CD8-positive, alpha-beta T cell (primary cell): ENCODE measurements at regions of chr1 and their contacts with region 1.

Region 1: DNA sequence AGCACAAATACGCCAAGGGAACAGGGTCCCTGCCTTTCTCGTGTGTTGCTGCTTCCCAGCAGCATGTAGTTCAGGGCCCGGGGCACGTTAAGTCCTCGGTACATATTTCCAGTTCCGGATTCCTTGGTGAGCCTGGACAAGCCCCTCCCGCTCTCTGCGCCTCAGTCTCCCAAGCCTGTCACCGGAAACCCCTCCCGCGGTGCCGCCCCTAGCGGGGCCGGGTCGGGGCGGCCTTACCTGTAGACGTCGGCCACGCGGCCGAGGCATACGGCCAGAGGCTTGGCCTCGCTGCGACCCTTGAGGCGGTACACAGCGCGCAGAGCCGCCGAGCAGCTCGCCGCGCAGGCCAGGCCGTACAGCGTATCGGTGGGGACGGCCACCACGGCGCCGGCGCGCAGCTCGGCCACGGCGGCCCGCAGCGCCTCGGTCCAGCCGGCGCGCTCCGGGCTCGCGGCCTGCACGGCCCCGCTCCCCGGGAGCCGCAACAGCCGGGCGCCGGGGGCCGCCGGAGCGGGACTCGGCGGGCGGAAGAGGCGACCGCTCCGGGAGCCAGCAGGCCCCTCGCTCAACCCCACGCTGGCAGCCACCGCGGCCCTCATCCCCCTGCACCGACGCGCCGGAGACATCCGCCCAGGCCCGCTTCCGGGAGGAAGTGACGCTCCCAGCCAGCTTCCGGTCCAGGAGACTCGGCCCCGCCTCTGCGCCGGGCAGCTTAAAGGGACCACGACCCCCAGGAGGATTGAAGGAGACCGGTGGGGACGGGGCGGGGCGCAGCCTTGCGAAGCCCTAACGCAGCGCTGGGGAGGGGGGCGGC is at the starts of genes C1orf122 and YRDC:
- DNase-seq: peak; percentile 82 to 95 (median 94)
- ATAC-seq: peak; percentile 88
- H3K4me3 ChIP-seq: peak within 1 kb of the TSS; percentile 69 to 92
- H3K4me3 Mint-ChIP-seq: peak within 1 kb of the TSS; percentile 97
- H3K27ac ChIP-seq: peak within 1 kb of the TSS; percentile 86 to 89
- H3K27ac Mint-ChIP-seq: peak within 1 kb of the TSS; percentile 98
- H3K4me1 ChIP-seq: peaks cover 30% of the 10 kb centered on the region
- H3K4me1 Mint-ChIP-seq: peaks cover 40% of the 10 kb centered on the region
- H3K27me3 ChIP-seq: no peaks in the 10 kb centered on the region
- H3K27me3 Mint-ChIP-seq: no peaks in the 10 kb centered on the region
- CTCF ChIP-seq: no peak
- total RNA-seq, gene C1orf122: 13.8 to 14.8 TPM
- total RNA-seq, gene YRDC: 31.6 to 32.8 TPM

Region 2: DNA sequence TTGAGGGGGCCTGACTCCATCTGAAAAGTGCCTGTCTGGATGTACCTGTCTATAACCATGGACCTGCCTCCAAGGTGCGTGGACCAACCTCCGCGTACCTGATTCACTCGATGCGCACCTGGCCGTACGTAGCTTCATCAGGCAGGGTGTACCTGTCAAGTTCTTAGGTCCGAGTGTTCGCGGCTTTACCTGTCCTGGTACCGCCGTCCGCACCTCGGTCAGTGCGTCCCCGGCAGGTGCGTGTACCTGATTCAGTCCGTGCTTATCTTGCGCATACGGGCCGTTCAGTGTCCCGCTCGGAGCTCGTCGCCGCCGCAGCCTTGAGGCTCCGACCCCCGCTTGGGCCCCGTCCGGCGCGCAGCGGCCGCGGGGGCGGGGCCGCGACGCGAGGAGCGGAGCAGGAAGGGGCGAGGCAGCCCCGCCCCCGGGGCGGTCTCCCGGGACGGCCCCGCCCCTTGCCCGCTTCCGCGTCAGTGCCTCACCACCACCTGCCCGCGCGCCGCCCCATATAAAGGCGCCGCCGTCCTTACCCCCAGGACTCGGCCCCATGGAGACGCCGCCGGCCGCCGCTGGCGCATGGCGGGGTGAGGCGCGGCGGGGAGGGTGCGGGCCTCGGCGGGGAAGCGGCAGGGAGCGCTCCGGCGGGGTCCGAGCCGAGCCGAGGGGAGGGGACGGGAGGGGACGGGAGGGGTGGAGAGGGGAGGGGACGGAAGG is 333.6 kb before region 1 on chr1 and contains the start of gene ZC3H12A:
- CTCF ChIA-PET with region 1: no interaction called
- POLR2A ChIA-PET with region 1: interaction called, 8 read pairs
- intact Hi-C with region 1: loop called in 1 of 2 experiments (anchors 10 kb)
- DNase-seq: peak; percentile 86 to 97 (median 92)
- ATAC-seq: peak; percentile 57
- H3K4me3 ChIP-seq: peak within 1 kb of the TSS; percentile 93 to 95
- H3K4me3 Mint-ChIP-seq: peak within 1 kb of the TSS; percentile 95
- H3K27ac ChIP-seq: peak within 1 kb of the TSS; percentile 95 to 99
- H3K27ac Mint-ChIP-seq: peak within 1 kb of the TSS; percentile 99
- H3K4me1 ChIP-seq: peaks cover 43% of the 10 kb centered on the region
- H3K4me1 Mint-ChIP-seq: peaks cover 59% of the 10 kb centered on the region
- H3K27me3 ChIP-seq: no peaks in the 10 kb centered on the region
- H3K27me3 Mint-ChIP-seq: no peaks in the 10 kb centered on the region
- CTCF ChIP-seq: no peak
- total RNA-seq, gene ZC3H12A: 202 to 205 TPM

Region 3: DNA sequence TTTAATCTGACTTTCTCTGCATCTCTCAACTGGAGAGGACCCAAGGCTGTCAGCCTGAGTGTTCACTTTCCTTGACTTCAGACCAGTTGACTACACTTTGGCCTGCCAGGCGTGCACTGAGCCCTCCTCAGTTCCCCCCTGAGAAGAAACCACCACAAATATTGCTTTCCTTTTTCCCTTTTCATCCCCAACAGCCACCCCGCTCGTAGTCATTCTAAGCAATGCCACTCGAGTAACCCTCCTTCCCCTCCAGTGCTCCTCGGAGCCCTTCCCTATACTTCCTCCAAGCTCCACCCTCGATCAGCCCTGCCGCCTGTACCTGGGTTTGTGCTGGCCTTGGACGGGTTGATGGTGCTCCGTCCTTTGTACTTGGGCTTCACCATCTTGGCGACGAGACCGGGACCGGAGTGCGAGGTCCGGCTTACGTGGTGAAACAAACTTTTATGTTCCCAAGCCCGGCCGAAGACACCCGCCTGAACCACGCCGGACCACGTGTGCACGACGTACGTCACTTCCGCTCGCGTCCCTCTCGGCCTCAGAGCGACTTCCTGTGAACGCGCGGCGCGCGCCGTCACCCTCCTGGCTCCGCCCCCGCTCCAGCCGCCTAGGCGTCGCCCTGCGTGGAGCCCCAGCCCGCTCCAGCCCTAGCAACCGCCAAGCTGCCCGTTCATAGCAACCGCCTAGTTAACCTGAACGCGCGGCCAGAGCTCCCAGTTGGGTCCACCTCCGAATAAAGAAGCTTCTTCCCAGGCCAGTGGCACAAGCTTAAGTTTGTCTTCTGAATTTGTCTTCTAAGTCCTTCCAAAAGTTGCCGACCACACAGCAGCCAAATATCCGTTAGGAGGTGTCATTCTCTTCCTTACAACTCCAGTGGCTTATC is 212.1 kb before region 1 on chr1 and contains the start of gene GNL2:
- CTCF ChIA-PET with region 1: no interaction called
- POLR2A ChIA-PET with region 1: no interaction called
- intact Hi-C with region 1: loop called (anchors 2 to 5 kb)
- DNase-seq: peak; percentile 92 to 99 (median 96)
- ATAC-seq: peak; percentile 95
- H3K4me3 ChIP-seq: peak within 1 kb of the TSS; percentile 67 to 88
- H3K4me3 Mint-ChIP-seq: peak within 1 kb of the TSS; percentile 100
- H3K27ac ChIP-seq: peak within 1 kb of the TSS; percentile 68 to 93
- H3K27ac Mint-ChIP-seq: peak within 1 kb of the TSS; percentile 99
- H3K4me1 ChIP-seq: peaks cover 23% of the 10 kb centered on the region
- H3K4me1 Mint-ChIP-seq: peaks cover 36% of the 10 kb centered on the region
- H3K27me3 ChIP-seq: no peaks in the 10 kb centered on the region
- H3K27me3 Mint-ChIP-seq: no peaks in the 10 kb centered on the region
- CTCF ChIP-seq: no peak
- total RNA-seq, gene GNL2: 54.6 to 55.2 TPM

Region 4: DNA sequence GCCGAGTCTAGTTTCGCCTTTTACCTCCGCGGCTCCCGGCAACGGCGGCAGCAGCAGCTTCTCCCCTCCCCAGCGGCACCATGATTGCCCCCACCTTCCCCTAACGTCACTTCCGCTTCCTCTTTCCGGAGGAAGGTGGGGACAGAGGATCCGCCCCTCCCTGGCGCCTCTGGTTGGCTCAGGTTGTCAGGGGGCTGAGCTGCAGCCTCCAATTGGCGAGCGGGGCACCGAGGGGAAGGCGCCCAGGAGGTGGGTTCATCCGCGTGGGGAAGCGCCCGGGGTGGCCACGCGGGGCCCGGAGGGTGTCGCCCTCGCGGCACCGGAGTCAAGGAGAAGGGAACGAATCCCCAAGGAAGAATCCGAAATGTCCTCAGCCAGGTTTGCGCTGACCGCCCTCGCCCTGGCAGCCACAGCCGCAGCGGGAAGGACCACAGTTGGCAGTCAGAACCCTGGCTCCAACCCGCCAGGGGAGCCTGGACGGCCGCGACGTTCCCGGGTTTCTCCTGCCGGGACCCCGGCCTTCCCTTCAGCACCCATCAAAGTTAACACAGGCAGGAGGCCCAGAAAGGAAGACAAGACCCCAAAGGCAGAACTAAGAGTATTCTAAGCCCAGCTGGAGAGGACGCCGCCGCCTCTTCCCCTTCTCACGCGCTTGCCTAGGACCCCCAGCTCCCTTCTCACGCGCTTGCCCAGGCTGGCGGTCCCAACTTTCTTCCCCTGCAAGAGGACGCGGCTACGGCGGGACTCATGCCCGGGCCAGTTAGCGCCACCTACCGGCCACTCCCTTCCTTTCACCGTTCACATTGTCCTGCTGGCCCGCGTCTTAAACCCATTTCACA is 52.0 kb after region 1 on chr1 and contains the start of gene MTF1:
- CTCF ChIA-PET with region 1: interaction called, 10 read pairs
- POLR2A ChIA-PET with region 1: interaction called, 21 read pairs
- intact Hi-C with region 1: loop called (anchors 1 kb)
- DNase-seq: peak; percentile 91 to 99 (median 96)
- ATAC-seq: peak; percentile 99
- H3K4me3 ChIP-seq: peak within 1 kb of the TSS; percentile 88 to 99
- H3K4me3 Mint-ChIP-seq: peak within 1 kb of the TSS; percentile 98
- H3K27ac ChIP-seq: peak within 1 kb of the TSS; percentile 94 to 96
- H3K27ac Mint-ChIP-seq: peak within 1 kb of the TSS; percentile 94
- H3K4me1 ChIP-seq: peaks cover 19% of the 10 kb centered on the region
- H3K4me1 Mint-ChIP-seq: peaks cover 34% of the 10 kb centered on the region
- H3K27me3 ChIP-seq: no peaks in the 10 kb centered on the region
- H3K27me3 Mint-ChIP-seq: no peaks in the 10 kb centered on the region
- CTCF ChIP-seq: peak; percentile 79
- total RNA-seq, gene MTF1: 30.3 to 30.8 TPM

Region 5: DNA sequence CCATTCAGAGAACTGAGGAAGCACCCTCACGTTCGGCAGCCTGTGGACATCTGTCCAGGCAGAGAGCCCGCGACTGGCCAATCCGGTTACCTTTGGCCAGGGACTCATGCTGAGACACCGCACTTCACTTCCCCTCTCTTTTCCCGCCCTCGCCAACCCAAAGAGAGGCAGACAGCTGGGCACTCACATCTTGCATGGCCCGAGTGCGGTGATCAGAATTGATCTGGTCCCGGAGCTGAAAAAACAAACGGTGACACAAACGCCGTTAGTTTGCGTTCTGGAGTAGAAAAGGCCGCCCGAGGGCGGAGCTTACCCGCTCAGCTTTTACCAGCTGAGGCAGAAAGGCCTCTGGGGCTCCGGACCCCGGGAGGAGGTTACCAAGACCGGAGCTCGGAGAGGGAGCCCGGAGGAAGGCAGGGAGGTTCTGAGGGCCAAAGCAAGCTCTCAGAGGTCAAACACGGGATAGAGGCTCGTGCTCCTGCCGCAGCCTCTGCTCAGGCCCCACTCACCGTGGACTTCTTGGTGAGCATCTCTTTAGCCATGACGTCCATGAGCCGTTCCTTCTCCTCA is 181.7 kb after region 1 on chr1:
- CTCF ChIA-PET with region 1: no interaction called
- POLR2A ChIA-PET with region 1: no interaction called
- intact Hi-C with region 1: loop called (anchors 1 to 5 kb)
- DNase-seq: peak in 5 of 9 experiments; percentile 32 to 60 (median 48)
- ATAC-seq: peak; percentile 35
- H3K4me3 ChIP-seq: peak overlapping the region; percentile 61 to 84
- H3K4me3 Mint-ChIP-seq: peak overlapping the region; percentile 99
- H3K27ac ChIP-seq: peak overlapping the region; percentile 56 to 71
- H3K27ac Mint-ChIP-seq: peak overlapping the region; percentile 95
- H3K4me1 ChIP-seq: peaks cover 15% of the 10 kb centered on the region
- H3K4me1 Mint-ChIP-seq: peaks cover 26% of the 10 kb centered on the region
- H3K27me3 ChIP-seq: no peaks in the 10 kb centered on the region
- H3K27me3 Mint-ChIP-seq: no peaks in the 10 kb centered on the region
- CTCF ChIP-seq: no peak

Region 6: GRCh38 chr1:38012363-38013226 is 204.8 kb after region 1 on chr1 and contains the start of gene UTP11:
- CTCF ChIA-PET with region 1: no interaction called
- POLR2A ChIA-PET with region 1: no interaction called
- intact Hi-C with region 1: loop called (anchors 1 to 10 kb)
- DNase-seq: peak; percentile 80 to 97 (median 88)
- ATAC-seq: peak; percentile 86
- H3K4me3 ChIP-seq: peak within 1 kb of the TSS; percentile 66 to 94
- H3K4me3 Mint-ChIP-seq: peak within 1 kb of the TSS; percentile 99
- H3K27ac ChIP-seq: peak within 1 kb of the TSS; percentile 74 to 94
- H3K27ac Mint-ChIP-seq: peak within 1 kb of the TSS; percentile 99
- H3K4me1 ChIP-seq: peaks cover 40% of the 10 kb centered on the region
- H3K4me1 Mint-ChIP-seq: peaks cover 57% of the 10 kb centered on the region
- H3K27me3 ChIP-seq: no peaks in the 10 kb centered on the region
- H3K27me3 Mint-ChIP-seq: no peaks in the 10 kb centered on the region
- CTCF ChIP-seq: no peak
- total RNA-seq, gene UTP11: 12.8 to 14.0 TPM